Naive thymus-derived CD8-positive, alpha-beta T cell (primary cell): ENCODE measurements at regions of chr22 and their contacts with region 1.

Region 1: GRCh38 chr22:42039271-42039670 is 31.3 kb downstream of the NAGA start:
- DNase-seq: no peak
- ATAC-seq: no peak
- H3K4me3 Mint-ChIP-seq: no peak overlapping the region
- H3K27ac Mint-ChIP-seq: no peak overlapping the region
- H3K4me1 Mint-ChIP-seq: peaks cover 0 to 7% (median under 1%) of the 10 kb centered on the region in 4 donors
- H3K27me3 Mint-ChIP-seq: peaks cover 0 to 2% (median 0%) of the 10 kb centered on the region in 5 donors

Region 2: DNA sequence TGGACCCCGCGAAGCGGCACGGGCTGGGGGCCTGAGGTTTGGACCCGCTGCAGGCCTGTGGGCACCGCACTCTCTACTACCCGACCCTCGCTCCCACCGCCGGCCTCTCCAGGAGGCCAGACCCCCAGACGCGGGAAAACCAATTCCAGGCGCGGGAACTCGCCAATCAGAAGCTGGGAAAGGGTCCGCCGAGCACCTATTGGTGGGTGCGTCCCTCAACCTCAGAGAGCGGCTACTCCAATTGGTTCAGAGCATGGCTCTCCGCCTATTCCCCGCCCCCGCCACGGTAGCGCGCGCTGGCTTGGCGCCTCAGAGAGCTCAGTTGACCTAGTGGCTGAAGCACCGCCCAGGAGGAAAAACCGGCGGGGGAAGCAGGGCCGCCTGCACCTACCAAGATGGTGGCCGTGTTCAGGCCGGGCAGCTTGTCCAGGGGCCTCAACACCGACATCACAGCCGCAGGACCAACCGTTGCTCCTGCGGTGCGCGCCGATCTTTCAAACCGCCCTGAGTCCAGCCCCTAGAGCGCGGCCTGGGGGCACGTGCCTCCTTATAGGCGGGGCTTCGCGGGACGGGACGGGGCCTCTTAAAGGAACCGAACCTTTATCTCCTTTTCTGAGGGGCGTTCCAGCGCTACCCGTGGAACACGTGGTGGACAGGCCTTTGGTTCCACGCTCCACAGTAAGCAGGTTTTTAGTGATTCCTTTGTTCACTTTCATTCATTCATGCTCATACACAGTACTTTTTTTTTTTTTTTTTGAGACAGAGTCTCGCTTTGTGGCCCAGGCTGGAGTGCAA is 92.4 kb before region 1 on chr22 and contains the start of gene CENPM:
- POLR2A ChIA-PET with region 1: no interaction called
- DNase-seq: peak; percentile 71 to 88 (median 78)
- ATAC-seq: peak; percentile 93 to 94
- H3K4me3 Mint-ChIP-seq: peak within 1 kb of the TSS; percentile 85 to 95 (median 91)
- H3K27ac Mint-ChIP-seq: peak within 1 kb of the TSS in 7 of 10 donors; percentile 44 to 86 (median 75)
- H3K4me1 Mint-ChIP-seq: peaks cover 0 to 22% (median 13%) of the 10 kb centered on the region in 4 donors
- H3K27me3 Mint-ChIP-seq: no peaks in the 10 kb centered on the region
- polyA plus RNA-seq, gene CENPM: 2.1 to 7.2 (median 2.3) TPM

Region 3: GRCh38 chr22:42052765-42053164 is 13.5 kb after region 1 on chr22:
- POLR2A ChIA-PET with region 1: interaction called, 11 read pairs
- DNase-seq: no peak
- ATAC-seq: no peak
- H3K4me3 Mint-ChIP-seq: no peak overlapping the region
- H3K27ac Mint-ChIP-seq: peak overlapping the region in 1 of 10 donors; percentile 40
- H3K4me1 Mint-ChIP-seq: no peaks in the 10 kb centered on the region
- H3K27me3 Mint-ChIP-seq: no peaks in the 10 kb centered on the region